Ascending aorta (tissue), 2 donors: ENCODE measurements at regions of chr15 and their contacts with region 1.

Region 1: DNA sequence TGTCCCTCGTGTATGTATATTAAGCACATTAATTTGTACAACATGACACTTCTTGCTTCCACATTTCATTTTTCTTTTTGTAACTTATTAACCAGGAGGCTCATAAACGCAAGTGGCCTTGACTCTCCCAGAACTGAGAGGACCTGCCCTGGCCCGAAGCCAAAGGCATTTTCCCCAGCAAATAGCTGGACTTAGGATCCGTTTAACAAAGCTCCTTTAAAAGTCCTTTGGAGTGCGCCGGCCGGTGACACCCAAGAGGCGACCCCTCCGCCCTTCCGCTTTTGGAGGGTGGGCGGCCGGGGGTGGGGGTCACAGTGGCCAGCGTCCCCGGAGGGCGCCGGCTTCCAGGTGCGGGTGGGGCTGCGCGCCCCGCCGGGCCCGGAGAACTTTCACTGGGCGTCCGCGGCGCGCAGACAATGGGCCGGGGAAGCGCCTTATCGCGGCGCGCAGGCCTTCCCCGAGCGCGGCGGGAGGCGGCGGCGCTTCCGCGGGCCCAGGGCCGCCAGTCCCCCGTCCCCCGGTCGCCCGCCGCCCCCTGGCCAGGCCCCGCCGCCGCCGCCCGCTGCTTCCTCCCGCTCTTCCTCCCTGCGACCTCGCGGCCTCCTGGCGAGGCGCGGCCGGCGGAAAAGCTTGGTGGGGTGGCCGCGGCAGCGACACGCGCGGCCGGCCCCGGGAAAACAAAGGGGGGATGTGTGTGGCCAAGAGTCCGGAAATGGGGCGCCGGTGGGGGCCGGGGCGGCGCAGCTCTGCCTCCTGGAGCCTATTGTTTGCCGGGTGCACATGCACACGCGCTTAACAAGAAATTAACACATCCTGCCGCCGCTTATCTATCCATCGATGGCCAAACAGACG is 613.4 kb downstream of the MCTP2 start:
- DNase-seq: peak in 1 of 2 donors; percentile 77
- H3K4me3 ChIP-seq: peak overlapping the region; percentile 53 to 69
- H3K27ac ChIP-seq: peak overlapping the region; percentile 88 to 92
- H3K4me1 ChIP-seq: peaks cover 5 to 22% of the 10 kb centered on the region in 2 donors
- H3K27me3 ChIP-seq: no peaks in the 10 kb centered on the region
- CTCF ChIP-seq: peak in 2 of 3 experiments; percentile 15 to 37

Region 2: GRCh38 chr15:94631608-94632007 is 213.2 kb before region 1 on chr15:
- intact Hi-C with region 1: no loop called
- DNase-seq: no peak
- H3K4me3 ChIP-seq: no peak overlapping the region
- H3K27ac ChIP-seq: no peak overlapping the region
- H3K4me1 ChIP-seq: no peaks in the 10 kb centered on the region
- H3K27me3 ChIP-seq: no peaks in the 10 kb centered on the region
- CTCF ChIP-seq: no peak

Region 3: GRCh38 chr15:94769089-94769488 is 75.7 kb before region 1 on chr15:
- intact Hi-C with region 1: loop called (anchors 5 kb)
- DNase-seq: no peak
- H3K4me3 ChIP-seq: no peak overlapping the region
- H3K27ac ChIP-seq: peak overlapping the region in 1 of 2 donors; percentile 8
- H3K4me1 ChIP-seq: no peaks in the 10 kb centered on the region
- H3K27me3 ChIP-seq: no peaks in the 10 kb centered on the region
- CTCF ChIP-seq: no peak

Region 4: DNA sequence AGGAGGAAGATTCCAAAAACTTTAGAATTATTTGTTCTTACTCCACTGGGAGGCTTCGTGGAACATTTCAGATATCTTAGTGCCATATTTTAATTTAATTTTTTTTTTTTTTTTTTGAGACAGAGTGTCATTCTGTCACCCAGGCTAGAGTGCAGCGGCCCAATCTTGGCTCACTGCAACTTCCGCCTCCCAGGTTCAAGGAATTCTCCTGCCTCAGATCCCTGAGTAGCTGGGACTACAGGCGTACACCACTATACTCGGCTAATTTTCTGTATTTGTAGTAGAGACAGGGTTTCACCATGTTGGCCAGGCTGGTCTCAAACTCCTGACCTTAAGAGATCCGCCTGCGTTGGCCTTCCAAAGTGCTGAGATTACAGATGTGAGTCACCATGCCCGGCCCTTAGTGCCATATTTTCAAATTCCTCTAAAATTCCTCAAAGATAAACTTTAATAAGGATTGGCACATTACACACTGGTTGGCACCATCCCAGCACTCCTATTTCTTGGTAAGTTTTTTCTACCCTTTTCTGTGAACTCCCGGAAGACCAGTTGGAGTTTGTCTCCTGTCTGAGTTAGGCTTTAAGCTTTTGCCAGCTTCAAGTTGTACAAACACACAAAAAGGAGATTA is 80.3 kb after region 1 on chr15:
- intact Hi-C with region 1: loop called (anchors 5 kb)
- DNase-seq: peak in 1 of 2 donors; percentile 69
- H3K4me3 ChIP-seq: no peak overlapping the region
- H3K27ac ChIP-seq: peak overlapping the region in 1 of 2 donors; percentile 36
- H3K4me1 ChIP-seq: peaks cover 0 to 13% of the 10 kb centered on the region in 2 donors
- H3K27me3 ChIP-seq: no peaks in the 10 kb centered on the region
- CTCF ChIP-seq: no peak